Activated CD4-positive, alpha-beta T cell treated with anti-CD3 and anti-CD28 coated beads for 36 hours (primary cell): ENCODE measurements at regions of chr14 and their contacts with region 1.

Region 1: GRCh38 chr14:34722717-34723545 is 8.5 kb upstream of the CFL2 start:
- DNase-seq: peak; percentile 51
- ATAC-seq: peak; percentile 61
- H3K4me3 Mint-ChIP-seq: no peak overlapping the region
- H3K27ac Mint-ChIP-seq: no peak overlapping the region
- H3K4me1 Mint-ChIP-seq: peaks cover 7% of the 10 kb centered on the region
- H3K27me3 Mint-ChIP-seq: no peaks in the 10 kb centered on the region

Region 2: GRCh38 chr14:34331728-34332623 is 391.0 kb before region 1 on chr14:
- CTCF ChIA-PET with region 1: no interaction called
- POLR2A ChIA-PET with region 1: no interaction called
- intact Hi-C with region 1: loop called in 1 of 2 experiments (anchors 10 kb)
- DNase-seq: peak; percentile 79
- ATAC-seq: peak; percentile 94
- H3K4me3 Mint-ChIP-seq: no peak overlapping the region
- H3K27ac Mint-ChIP-seq: no peak overlapping the region
- H3K4me1 Mint-ChIP-seq: peaks cover 4% of the 10 kb centered on the region
- H3K27me3 Mint-ChIP-seq: no peaks in the 10 kb centered on the region

Region 3: GRCh38 chr14:34668111-34668510 is 54.8 kb before region 1 on chr14:
- CTCF ChIA-PET with region 1: interaction called, 43 read pairs
- POLR2A ChIA-PET with region 1: no interaction called
- intact Hi-C with region 1: loop called (anchors 1 kb)
- DNase-seq: no peak
- ATAC-seq: no peak
- H3K4me3 Mint-ChIP-seq: no peak overlapping the region
- H3K27ac Mint-ChIP-seq: no peak overlapping the region
- H3K4me1 Mint-ChIP-seq: peaks cover 6% of the 10 kb centered on the region
- H3K27me3 Mint-ChIP-seq: no peaks in the 10 kb centered on the region

Region 4: GRCh38 chr14:34688470-34689206 is 34.3 kb before region 1 on chr14:
- CTCF ChIA-PET with region 1: interaction called, 11 read pairs
- POLR2A ChIA-PET with region 1: no interaction called
- intact Hi-C with region 1: no loop called
- DNase-seq: no peak
- ATAC-seq: no peak
- H3K4me3 Mint-ChIP-seq: no peak overlapping the region
- H3K27ac Mint-ChIP-seq: no peak overlapping the region
- H3K4me1 Mint-ChIP-seq: peaks cover 8% of the 10 kb centered on the region
- H3K27me3 Mint-ChIP-seq: no peaks in the 10 kb centered on the region

Region 5: DNA sequence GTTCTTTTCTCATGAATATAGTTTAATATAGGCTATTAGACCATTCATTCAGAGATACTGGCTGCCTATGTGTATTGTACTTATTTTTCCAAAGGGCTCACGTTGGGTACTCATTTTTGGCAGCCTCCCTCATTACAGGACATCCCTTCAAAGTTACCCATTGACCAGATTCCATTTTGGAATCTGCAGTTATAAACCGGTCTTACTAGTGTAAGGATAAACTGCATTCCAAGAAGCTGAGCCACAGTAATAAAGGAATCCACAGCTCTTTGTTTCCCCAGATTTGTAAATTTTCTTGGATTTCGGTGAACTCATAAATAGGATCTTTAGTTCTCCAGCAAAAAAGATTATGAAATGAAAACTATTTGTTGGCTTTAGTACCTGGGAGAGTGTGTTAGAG is 10.3 kb after region 1 on chr14:
- CTCF ChIA-PET with region 1: interaction called, 23 read pairs
- POLR2A ChIA-PET with region 1: no interaction called
- intact Hi-C with region 1: no loop called
- DNase-seq: no peak
- ATAC-seq: no peak
- H3K4me3 Mint-ChIP-seq: no peak overlapping the region
- H3K27ac Mint-ChIP-seq: no peak overlapping the region
- H3K4me1 Mint-ChIP-seq: no peaks in the 10 kb centered on the region
- H3K27me3 Mint-ChIP-seq: peaks cover 2% of the 10 kb centered on the region

Region 6: GRCh38 chr14:34749408-34749807 is 26.5 kb after region 1 on chr14:
- CTCF ChIA-PET with region 1: interaction called, 16 read pairs
- POLR2A ChIA-PET with region 1: no interaction called
- intact Hi-C with region 1: no loop called
- DNase-seq: no peak
- ATAC-seq: no peak
- H3K4me3 Mint-ChIP-seq: no peak overlapping the region
- H3K27ac Mint-ChIP-seq: no peak overlapping the region
- H3K4me1 Mint-ChIP-seq: no peaks in the 10 kb centered on the region
- H3K27me3 Mint-ChIP-seq: no peaks in the 10 kb centered on the region